ENCODE measurements at regions of chr16 and their contacts with region 1.

Region 1: GRCh38 chr16:2905431-2906387 is 6.0 kb upstream of the FLYWCH1 start:
- DNase-seq: peak; percentile 99
- H3K4me3 Mint-ChIP-seq: peak overlapping the region; percentile 90
- H3K27ac Mint-ChIP-seq: no peak overlapping the region
- H3K4me1 Mint-ChIP-seq: peaks cover 18% of the 10 kb centered on the region
- H3K27me3 Mint-ChIP-seq: no peaks in the 10 kb centered on the region

Region 2: GRCh38 chr16:2777231-2777902 is 128.3 kb before region 1 on chr16 and contains the start of gene ELOB:
- CTCF ChIA-PET with region 1: no interaction called
- intact Hi-C with region 1: loop called (anchors 2 kb)
- DNase-seq: peak; percentile 91
- H3K4me3 Mint-ChIP-seq: peak within 1 kb of the TSS; percentile 94
- H3K27ac Mint-ChIP-seq: peak within 1 kb of the TSS; percentile 96
- H3K4me1 Mint-ChIP-seq: peaks cover 31% of the 10 kb centered on the region
- H3K27me3 Mint-ChIP-seq: no peaks in the 10 kb centered on the region
- total RNA-seq, gene ELOB: 177 to 189 TPM

Region 3: GRCh38 chr16:2874912-2875362 is 30.8 kb before region 1 on chr16:
- CTCF ChIA-PET with region 1: interaction called, 4 read pairs
- intact Hi-C with region 1: loop called (anchors 1 kb)
- DNase-seq: peak; percentile 72
- H3K4me3 Mint-ChIP-seq: no peak overlapping the region
- H3K27ac Mint-ChIP-seq: no peak overlapping the region
- H3K4me1 Mint-ChIP-seq: no peaks in the 10 kb centered on the region
- H3K27me3 Mint-ChIP-seq: no peaks in the 10 kb centered on the region

Region 4: GRCh38 chr16:2919511-2920255 is 14.0 kb after region 1 on chr16:
- CTCF ChIA-PET with region 1: interaction called, 7 read pairs
- intact Hi-C with region 1: loop called (anchors 1 kb)
- DNase-seq: peak; percentile 74
- H3K4me3 Mint-ChIP-seq: no peak overlapping the region
- H3K27ac Mint-ChIP-seq: peak overlapping the region; percentile 56
- H3K4me1 Mint-ChIP-seq: peaks cover 14% of the 10 kb centered on the region
- H3K27me3 Mint-ChIP-seq: no peaks in the 10 kb centered on the region

Region 5: GRCh38 chr16:2980227-2981086 is 74.7 kb after region 1 on chr16 and contains the start of gene PKMYT1:
- CTCF ChIA-PET with region 1: no interaction called
- intact Hi-C with region 1: loop called (anchors 2 kb)
- DNase-seq: peak; percentile 95
- H3K4me3 Mint-ChIP-seq: peak within 1 kb of the TSS; percentile 81
- H3K27ac Mint-ChIP-seq: peak within 1 kb of the TSS; percentile 84
- H3K4me1 Mint-ChIP-seq: peaks cover 14% of the 10 kb centered on the region
- H3K27me3 Mint-ChIP-seq: no peaks in the 10 kb centered on the region
- total RNA-seq, gene PKMYT1: 128 to 136 TPM

Region 6: GRCh38 chr16:3087243-3088235 is 181.8 kb after region 1 on chr16:
- CTCF ChIA-PET with region 1: no interaction called
- intact Hi-C with region 1: no loop called
- DNase-seq: no peak
- H3K4me3 Mint-ChIP-seq: no peak overlapping the region
- H3K27ac Mint-ChIP-seq: no peak overlapping the region
- H3K4me1 Mint-ChIP-seq: peaks cover 25% of the 10 kb centered on the region
- H3K27me3 Mint-ChIP-seq: no peaks in the 10 kb centered on the region

Measured in activated naive CD4-positive, alpha-beta T cell treated with anti-CD3 and anti-CD28 coated beads for 36 hours (primary cell).